ENCODE measurements at regions of chr2 and their contacts with region 1.

Region 1: DNA sequence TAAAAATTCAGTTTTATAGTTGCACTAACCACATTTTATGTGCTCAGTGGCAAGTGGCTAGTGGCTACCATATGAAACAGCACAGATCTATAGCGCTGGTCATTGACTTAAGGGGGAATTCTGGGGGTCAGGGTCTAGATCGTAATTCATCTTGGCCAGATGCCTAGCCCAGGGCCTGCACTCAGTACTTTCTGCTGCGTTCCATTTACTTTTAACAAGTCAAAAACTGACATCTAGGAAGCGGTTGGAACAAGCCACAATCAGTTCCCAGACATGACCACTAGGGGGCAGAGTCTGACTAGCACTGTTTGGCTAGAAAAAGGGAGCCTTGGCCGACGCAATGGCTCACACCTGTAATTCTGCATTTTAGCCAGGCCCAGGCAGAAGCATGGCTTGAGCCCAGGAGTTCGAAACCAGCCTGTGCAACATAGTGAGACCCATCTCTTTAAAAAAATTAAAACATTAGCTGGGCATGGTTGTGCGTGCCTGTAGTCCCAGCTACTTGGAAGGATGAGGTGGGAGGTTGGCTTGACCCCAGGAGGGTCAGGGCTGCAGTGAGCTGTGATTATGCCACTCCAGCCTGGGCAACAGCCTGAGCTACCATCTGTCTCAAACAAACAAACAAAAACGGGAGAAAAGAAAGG is 9.0 kb upstream of the TMBIM1 start:
- DNase-seq: peak; percentile 75
- H3K4me3 ChIP-seq: no peak overlapping the region
- H3K27ac ChIP-seq: no peak overlapping the region
- H3K4me1 ChIP-seq: no peaks in the 10 kb centered on the region
- H3K27me3 ChIP-seq: no peaks in the 10 kb centered on the region
- CTCF ChIP-seq: peak; percentile 98

Region 2: GRCh38 chr2:218357236-218358159 is 56.2 kb after region 1 on chr2:
- intact Hi-C with region 1: loop called (anchors 2 kb)
- DNase-seq: no peak
- H3K4me3 ChIP-seq: no peak overlapping the region
- H3K27ac ChIP-seq: no peak overlapping the region
- H3K4me1 ChIP-seq: no peaks in the 10 kb centered on the region
- H3K27me3 ChIP-seq: no peaks in the 10 kb centered on the region
- CTCF ChIP-seq: no peak

Region 3: DNA sequence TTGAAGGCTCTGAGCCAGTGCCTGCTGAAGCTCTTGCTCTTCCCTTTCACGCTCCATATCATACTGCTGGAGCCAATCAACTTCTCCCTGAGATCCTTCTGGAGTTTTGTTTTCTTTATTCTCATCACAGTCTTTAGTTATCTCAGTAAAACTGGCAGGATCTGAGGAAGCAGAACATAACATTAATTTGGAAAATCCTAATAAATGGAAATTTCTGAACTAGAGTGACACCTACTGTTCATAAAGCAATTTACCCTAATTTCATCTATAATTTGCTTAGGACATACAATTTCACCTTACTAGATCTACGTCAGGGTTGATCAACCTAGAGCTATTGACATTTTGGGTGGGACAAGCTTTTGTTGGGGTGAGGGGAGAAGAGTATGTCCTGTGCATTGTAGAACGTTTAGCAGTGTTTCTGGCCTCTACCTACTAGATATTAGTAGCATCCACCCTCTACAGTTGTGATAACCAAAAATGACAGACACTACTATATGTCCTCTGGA is 164.8 kb after region 1 on chr2:
- intact Hi-C with region 1: loop called (anchors 5 kb)
- DNase-seq: no peak
- H3K4me3 ChIP-seq: no peak overlapping the region
- H3K27ac ChIP-seq: no peak overlapping the region
- H3K4me1 ChIP-seq: peaks cover 3% of the 10 kb centered on the region
- H3K27me3 ChIP-seq: no peaks in the 10 kb centered on the region
- CTCF ChIP-seq: peak; percentile 67

Measured in left ventricle myocardium inferior (tissue), 1 donor.